Naive thymus-derived CD4-positive, alpha-beta T cell (primary cell): ENCODE measurements at regions of chr14 and their contacts with region 1.

Region 1: GRCh38 chr14:63543000-63543825 is at the start of gene PPP2R5E:
- DNase-seq: peak; percentile 90 to 98 (median 97)
- ATAC-seq: peak; percentile 98
- H3K4me3 ChIP-seq: peak within 1 kb of the TSS; percentile 89
- H3K4me3 Mint-ChIP-seq: peak within 1 kb of the TSS; percentile 87 to 100 (median 97)
- H3K27ac ChIP-seq: peak within 1 kb of the TSS; percentile 93
- H3K27ac Mint-ChIP-seq: peak within 1 kb of the TSS; percentile 88 to 98 (median 93)
- H3K4me1 ChIP-seq: peaks cover 11 to 20% of the 10 kb centered on the region in 2 donors
- H3K4me1 Mint-ChIP-seq: peaks cover 23 to 40% (median 36%) of the 10 kb centered on the region in 7 donors
- H3K27me3 ChIP-seq: no peaks in the 10 kb centered on the region
- H3K27me3 Mint-ChIP-seq: peaks cover 0 to 2% (median 0%) of the 10 kb centered on the region in 5 donors
- total RNA-seq, gene PPP2R5E: 36.9 to 47.8 (median 37.7) TPM

Region 2: DNA sequence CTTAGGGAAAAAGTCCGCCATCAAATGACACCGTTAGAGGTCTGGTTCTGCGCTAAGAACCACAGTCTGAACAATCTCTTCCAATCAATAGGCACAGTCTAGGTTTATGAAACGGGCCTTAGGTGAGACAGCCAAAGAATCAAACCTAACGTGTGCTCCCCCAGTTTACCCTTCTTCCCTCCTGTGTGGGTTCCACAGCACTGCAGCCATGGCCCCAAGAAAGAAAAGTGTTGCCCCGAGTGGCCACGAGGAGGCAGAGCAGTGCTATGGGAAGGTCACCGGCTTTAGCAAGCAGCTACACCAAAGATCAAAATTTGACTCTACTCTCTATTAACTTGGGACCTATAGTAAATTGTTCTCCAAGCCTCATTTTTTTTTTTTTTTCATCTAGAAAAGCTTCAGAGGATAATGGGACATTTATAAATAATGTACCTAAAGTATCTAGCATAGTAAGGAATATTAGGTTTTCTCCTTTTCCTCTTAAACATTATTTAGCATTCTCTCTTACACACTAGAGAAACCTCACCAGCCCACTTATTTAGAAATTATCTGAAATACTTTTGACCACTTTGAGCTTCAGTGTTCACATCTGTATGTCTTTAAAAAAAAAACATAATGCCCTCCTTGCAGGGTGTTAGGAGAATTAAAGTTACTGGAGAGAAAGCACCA is 154.3 kb before region 1 on chr14:
- CTCF ChIA-PET with region 1: interaction called, 3 read pairs
- POLR2A ChIA-PET with region 1: no interaction called
- intact Hi-C with region 1: loop called in 1 of 2 experiments (anchors 2 kb)
- DNase-seq: peak in 8 of 9 donors; percentile 4 to 52 (median 24)
- ATAC-seq: peak; percentile 86
- H3K4me3 ChIP-seq: no peak overlapping the region
- H3K4me3 Mint-ChIP-seq: no peak overlapping the region
- H3K27ac ChIP-seq: no peak overlapping the region
- H3K27ac Mint-ChIP-seq: peak overlapping the region in 1 of 9 donors; percentile 43
- H3K4me1 ChIP-seq: no peaks in the 10 kb centered on the region
- H3K4me1 Mint-ChIP-seq: peaks cover 0 to 9% (median under 1%) of the 10 kb centered on the region in 7 donors
- H3K27me3 ChIP-seq: no peaks in the 10 kb centered on the region
- H3K27me3 Mint-ChIP-seq: no peaks in the 10 kb centered on the region

Region 3: DNA sequence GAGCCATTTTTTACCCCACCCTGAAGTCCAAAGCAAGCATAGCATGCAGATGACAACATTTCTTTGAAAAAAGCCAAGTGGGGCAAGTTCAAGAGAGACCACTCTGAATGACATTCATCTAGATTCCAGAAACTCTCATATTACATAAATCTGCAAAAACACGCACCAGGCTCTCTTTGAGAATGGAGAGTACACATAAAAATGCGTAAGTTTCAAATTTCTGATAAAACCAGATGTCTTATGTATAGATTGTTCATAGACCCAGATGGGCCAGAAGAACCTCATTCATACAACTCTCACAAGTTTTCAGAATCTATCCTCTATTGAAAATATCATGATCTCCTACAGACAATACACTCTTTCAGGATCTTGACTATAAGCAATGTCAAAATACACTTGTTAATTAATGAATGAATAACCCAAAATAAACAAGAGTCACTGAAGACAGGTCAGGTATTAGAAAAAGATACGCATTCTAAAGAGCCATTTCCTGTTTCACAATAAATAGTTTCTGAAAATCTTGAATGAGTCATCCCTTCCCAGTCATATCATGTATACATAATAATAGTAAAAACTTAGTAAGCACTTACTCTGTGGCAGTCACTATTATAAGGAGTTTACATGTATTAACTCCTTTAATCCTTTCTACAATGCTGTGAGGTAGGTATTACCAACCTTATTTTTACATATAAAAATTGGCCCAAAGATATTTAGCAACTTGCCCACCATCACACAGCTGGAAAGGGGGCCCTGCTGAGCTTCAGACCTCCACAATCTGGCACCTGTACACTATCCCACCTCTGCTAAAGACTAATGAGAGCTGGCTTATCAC is 72.0 kb before region 1 on chr14:
- CTCF ChIA-PET with region 1: no interaction called
- POLR2A ChIA-PET with region 1: interaction called, 3 read pairs
- intact Hi-C with region 1: loop called in 1 of 2 experiments (anchors 2 kb)
- DNase-seq: no peak
- ATAC-seq: peak; percentile 60
- H3K4me3 ChIP-seq: no peak overlapping the region
- H3K4me3 Mint-ChIP-seq: peak overlapping the region in 5 of 10 donors; percentile 2 to 60 (median 34)
- H3K27ac ChIP-seq: no peak overlapping the region
- H3K27ac Mint-ChIP-seq: peak overlapping the region in 4 of 9 donors; percentile 5 to 74 (median 38)
- H3K4me1 ChIP-seq: peaks cover 7 to 24% of the 10 kb centered on the region in 2 donors
- H3K4me1 Mint-ChIP-seq: peaks cover 32 to 58% (median 50%) of the 10 kb centered on the region in 7 donors
- H3K27me3 ChIP-seq: no peaks in the 10 kb centered on the region
- H3K27me3 Mint-ChIP-seq: no peaks in the 10 kb centered on the region

Region 4: GRCh38 chr14:63650256-63650952 is 107.2 kb after region 1 on chr14:
- CTCF ChIA-PET with region 1: no interaction called
- POLR2A ChIA-PET with region 1: interaction called, 14 read pairs
- intact Hi-C with region 1: no loop called
- DNase-seq: peak in 7 of 9 donors; percentile 76 to 92 (median 87)
- ATAC-seq: peak; percentile 98
- H3K4me3 ChIP-seq: peak overlapping the region; percentile 3
- H3K4me3 Mint-ChIP-seq: peak overlapping the region; percentile 38 to 95 (median 75)
- H3K27ac ChIP-seq: peak overlapping the region; percentile 89
- H3K27ac Mint-ChIP-seq: peak overlapping the region; percentile 90 to 100 (median 100)
- H3K4me1 ChIP-seq: peaks cover 25 to 45% of the 10 kb centered on the region in 2 donors
- H3K4me1 Mint-ChIP-seq: peaks cover 21 to 69% (median 53%) of the 10 kb centered on the region in 7 donors
- H3K27me3 ChIP-seq: no peaks in the 10 kb centered on the region
- H3K27me3 Mint-ChIP-seq: no peaks in the 10 kb centered on the region

Region 5: DNA sequence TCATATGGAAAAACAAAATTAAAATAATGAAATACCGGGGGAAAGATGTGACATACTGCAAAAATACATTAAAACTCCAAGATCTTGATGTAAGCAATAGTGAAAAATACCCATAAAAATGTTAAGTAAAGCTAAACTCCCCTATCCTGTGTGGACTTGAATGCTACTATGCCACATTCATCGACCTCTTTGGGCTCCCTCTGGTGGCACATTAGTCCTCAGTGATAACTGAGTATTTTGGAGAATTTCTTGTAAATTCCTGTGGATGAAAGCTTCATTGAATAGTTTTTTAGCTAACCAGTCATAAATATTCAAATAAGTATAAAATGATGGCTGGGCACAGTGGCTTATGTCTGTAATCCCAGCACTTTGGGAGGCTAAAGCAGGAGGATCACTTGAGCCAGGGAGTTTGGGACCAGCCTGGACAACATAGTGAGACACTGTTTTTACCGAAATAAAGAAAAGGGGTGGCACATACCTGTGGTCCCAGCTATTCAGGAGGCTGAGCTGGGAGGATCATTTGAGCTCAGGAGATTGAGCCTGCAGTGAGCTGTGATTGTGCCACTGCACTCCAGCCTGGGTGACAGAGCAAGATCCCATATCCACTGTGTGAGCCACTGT is 227.1 kb after region 1 on chr14:
- CTCF ChIA-PET with region 1: no interaction called
- POLR2A ChIA-PET with region 1: no interaction called
- intact Hi-C with region 1: loop called (anchors 1 to 2 kb)
- DNase-seq: peak in 7 of 9 donors; percentile 37 to 71 (median 62)
- ATAC-seq: peak; percentile 89
- H3K4me3 ChIP-seq: no peak overlapping the region
- H3K4me3 Mint-ChIP-seq: no peak overlapping the region
- H3K27ac ChIP-seq: no peak overlapping the region
- H3K27ac Mint-ChIP-seq: peak overlapping the region in 2 of 9 donors; percentile 4 to 5
- H3K4me1 ChIP-seq: peaks cover 0 to 4% of the 10 kb centered on the region in 2 donors
- H3K4me1 Mint-ChIP-seq: peaks cover 0 to 20% (median 9%) of the 10 kb centered on the region in 7 donors
- H3K27me3 ChIP-seq: no peaks in the 10 kb centered on the region
- H3K27me3 Mint-ChIP-seq: peaks cover 0 to 4% (median 0%) of the 10 kb centered on the region in 5 donors

Region 6: GRCh38 chr14:64338616-64339316 is 795.6 kb after region 1 on chr14:
- CTCF ChIA-PET with region 1: no interaction called
- POLR2A ChIA-PET with region 1: no interaction called
- intact Hi-C with region 1: loop called (anchors 1 to 2 kb)
- DNase-seq: peak; percentile 50 to 84 (median 79)
- ATAC-seq: peak; percentile 87
- H3K4me3 ChIP-seq: peak overlapping the region; percentile 57
- H3K4me3 Mint-ChIP-seq: peak overlapping the region; percentile 87 to 99 (median 92)
- H3K27ac ChIP-seq: peak overlapping the region; percentile 72
- H3K27ac Mint-ChIP-seq: peak overlapping the region; percentile 81 to 91 (median 86)
- H3K4me1 ChIP-seq: peaks cover 5 to 10% of the 10 kb centered on the region in 2 donors
- H3K4me1 Mint-ChIP-seq: peaks cover 6 to 36% (median 19%) of the 10 kb centered on the region in 7 donors
- H3K27me3 ChIP-seq: no peaks in the 10 kb centered on the region
- H3K27me3 Mint-ChIP-seq: no peaks in the 10 kb centered on the region

Region 7: GRCh38 chr14:65102441-65103149 is 1559.4 kb after region 1 on chr14 and contains the start of gene MAX:
- CTCF ChIA-PET with region 1: no interaction called
- POLR2A ChIA-PET with region 1: no interaction called
- intact Hi-C with region 1: loop called in 1 of 2 experiments (anchors 1 kb)
- DNase-seq: peak; percentile 88 to 100 (median 99)
- ATAC-seq: peak; percentile 95
- H3K4me3 ChIP-seq: peak within 1 kb of the TSS; percentile 96
- H3K4me3 Mint-ChIP-seq: peak within 1 kb of the TSS; percentile 87 to 97 (median 91)
- H3K27ac ChIP-seq: peak within 1 kb of the TSS; percentile 100
- H3K27ac Mint-ChIP-seq: peak within 1 kb of the TSS; percentile 91 to 99 (median 94)
- H3K4me1 ChIP-seq: peaks cover 17 to 34% of the 10 kb centered on the region in 2 donors
- H3K4me1 Mint-ChIP-seq: peaks cover 28 to 43% (median 42%) of the 10 kb centered on the region in 7 donors
- H3K27me3 ChIP-seq: no peaks in the 10 kb centered on the region
- H3K27me3 Mint-ChIP-seq: peaks cover 0 to 12% (median 0%) of the 10 kb centered on the region in 5 donors
- total RNA-seq, gene MAX: 164 to 236 (median 202) TPM